Ascending aorta (tissue), 2 donors: ENCODE measurements at regions of chr11 and their contacts with region 1.

Region 1: DNA sequence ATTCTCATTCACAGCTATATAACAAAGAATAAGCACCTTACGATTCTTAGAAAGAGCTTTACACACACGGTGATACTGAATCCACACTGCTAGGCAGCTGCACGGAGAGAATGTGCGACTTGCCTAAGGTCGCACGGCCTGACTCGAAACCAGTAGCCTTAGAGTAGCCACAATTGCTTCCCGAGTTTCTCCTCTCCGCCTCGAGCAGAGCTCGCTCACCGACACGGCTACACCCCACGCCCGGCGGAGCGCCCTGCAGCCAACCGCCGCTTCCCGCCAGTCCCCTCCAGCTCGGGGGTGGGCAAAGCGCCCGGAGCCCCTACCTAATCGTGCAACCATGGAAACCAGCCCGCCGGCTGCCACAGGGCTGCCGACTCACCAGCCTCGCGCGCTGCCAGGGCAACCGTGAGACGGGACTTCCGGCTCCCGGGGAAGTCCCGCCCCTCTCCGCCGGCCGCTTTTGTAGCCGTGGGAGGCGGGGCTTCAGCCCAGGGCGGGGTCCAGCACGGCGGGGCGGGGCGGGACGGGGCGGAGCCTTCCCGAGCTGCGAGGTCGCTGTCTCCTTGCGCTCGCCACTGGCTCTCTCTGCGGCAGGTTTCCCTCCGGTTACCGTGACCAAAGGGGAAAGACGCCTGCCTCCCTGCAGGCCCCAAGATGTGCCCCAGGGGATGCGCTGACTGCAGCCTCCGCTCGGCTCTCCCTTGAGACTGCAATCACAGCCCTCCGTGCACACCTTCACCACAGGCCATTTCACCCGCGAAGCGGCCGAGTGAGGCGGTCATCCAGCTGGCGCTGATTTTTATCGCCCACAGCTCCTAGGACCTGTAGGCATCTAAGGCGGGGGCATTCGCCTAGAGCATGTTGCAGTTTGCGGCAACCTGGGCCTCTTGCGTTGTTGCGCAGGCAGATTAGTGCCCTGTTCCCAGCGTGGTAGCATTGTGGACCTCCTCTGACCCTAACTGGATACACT is 1.1 kb downstream of the BSCL2 start:
- DNase-seq: peak; percentile 85 to 98
- H3K4me3 ChIP-seq: peak overlapping the region; percentile 75 to 76
- H3K27ac ChIP-seq: peak overlapping the region; percentile 61 to 86
- H3K4me1 ChIP-seq: peaks cover 8 to 21% of the 10 kb centered on the region in 2 donors
- H3K27me3 ChIP-seq: no peaks in the 10 kb centered on the region
- CTCF ChIP-seq: no peak

Region 2: DNA sequence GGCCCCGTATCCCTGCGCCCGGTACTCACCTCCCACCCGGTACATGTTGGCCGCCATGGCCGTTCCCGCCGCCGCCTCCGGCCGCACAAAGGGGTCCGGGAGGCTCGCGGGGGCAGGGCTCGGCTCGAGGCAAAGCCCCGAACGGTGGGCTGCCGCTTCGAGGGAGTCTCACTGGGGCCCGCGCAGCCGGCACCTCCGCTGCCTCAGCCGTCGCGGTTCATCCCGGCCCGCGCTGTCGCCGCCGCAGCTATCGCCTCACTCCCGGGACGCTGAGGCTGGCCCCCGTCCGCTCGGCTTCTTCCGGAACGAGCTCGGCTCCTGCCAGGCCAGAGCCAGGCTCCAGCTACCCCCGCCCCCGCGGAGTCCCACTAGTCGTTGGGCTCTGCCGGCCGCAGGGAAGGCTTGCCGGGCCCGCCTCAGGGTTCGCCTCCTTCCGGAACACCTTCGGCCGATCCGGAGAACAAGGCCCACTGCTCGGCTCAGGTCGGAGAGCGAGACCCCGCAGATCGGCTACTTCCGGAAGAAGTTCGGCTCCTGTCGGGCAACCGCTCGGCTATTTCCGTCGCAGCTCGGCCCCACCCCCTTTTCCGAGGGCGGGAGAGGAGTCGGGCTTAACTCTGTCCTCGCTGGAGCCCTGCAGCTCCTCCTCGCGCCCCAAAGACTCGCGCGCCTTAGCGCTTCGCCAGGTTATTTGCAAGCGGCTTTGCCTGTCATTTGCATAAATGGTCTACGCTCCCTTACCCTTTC is 104.6 kb before region 1 on chr11 and contains the start of gene MTA2:
- intact Hi-C with region 1: loop called (anchors 2 kb)
- DNase-seq: peak; percentile 89 to 98
- H3K4me3 ChIP-seq: peak within 1 kb of the TSS; percentile 87 to 98
- H3K27ac ChIP-seq: peak within 1 kb of the TSS; percentile 96 to 97
- H3K4me1 ChIP-seq: peaks cover 8 to 20% of the 10 kb centered on the region in 2 donors
- H3K27me3 ChIP-seq: no peaks in the 10 kb centered on the region
- CTCF ChIP-seq: no peak
- total RNA-seq, gene MTA2: 79.2 TPM

Region 3: DNA sequence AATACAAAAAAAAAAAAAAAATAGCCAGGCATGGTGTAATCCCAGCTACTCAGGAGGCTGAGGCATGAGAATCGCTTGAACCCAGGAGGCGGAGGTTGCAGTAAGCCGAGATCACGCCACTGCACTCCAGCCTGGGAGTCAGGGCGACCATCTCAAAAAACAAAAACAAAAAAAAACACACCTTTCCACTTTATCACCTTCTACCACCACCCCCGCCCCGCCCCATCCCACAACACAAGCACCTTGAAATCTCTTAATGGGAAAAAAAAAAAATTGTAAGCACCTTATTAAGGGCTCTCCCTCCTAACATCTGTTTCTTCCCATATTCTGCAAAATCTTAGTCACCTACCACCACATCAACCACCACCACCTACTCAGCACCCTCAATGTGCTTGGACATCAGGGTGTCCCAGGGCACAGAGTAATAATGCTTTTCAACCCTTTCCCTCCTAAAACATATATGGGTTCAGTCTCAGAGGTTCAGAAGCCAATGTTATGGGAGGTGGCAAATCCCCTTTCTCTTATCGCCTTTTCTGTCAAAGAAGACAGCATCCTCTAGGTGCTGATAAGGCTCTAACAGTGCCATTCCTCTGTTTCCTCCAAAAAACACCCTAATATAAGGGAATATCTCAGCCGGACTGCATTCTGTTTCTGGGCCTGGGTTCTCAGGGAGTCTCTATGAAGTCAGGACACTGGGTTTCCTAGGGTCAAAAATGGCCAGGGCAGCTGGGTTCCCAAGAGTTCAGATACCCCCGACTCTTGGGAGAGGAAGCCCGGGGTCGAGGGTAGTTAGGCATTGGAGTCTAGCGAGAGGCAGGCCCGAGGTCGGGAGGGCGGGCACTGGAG is 53.8 kb before region 1 on chr11:
- intact Hi-C with region 1: loop called (anchors 2 kb)
- DNase-seq: no peak
- H3K4me3 ChIP-seq: peak overlapping the region; percentile 78 to 96
- H3K27ac ChIP-seq: peak overlapping the region; percentile 93 to 94
- H3K4me1 ChIP-seq: peaks cover 0 to 15% of the 10 kb centered on the region in 2 donors
- H3K27me3 ChIP-seq: no peaks in the 10 kb centered on the region
- CTCF ChIP-seq: no peak

Region 4: DNA sequence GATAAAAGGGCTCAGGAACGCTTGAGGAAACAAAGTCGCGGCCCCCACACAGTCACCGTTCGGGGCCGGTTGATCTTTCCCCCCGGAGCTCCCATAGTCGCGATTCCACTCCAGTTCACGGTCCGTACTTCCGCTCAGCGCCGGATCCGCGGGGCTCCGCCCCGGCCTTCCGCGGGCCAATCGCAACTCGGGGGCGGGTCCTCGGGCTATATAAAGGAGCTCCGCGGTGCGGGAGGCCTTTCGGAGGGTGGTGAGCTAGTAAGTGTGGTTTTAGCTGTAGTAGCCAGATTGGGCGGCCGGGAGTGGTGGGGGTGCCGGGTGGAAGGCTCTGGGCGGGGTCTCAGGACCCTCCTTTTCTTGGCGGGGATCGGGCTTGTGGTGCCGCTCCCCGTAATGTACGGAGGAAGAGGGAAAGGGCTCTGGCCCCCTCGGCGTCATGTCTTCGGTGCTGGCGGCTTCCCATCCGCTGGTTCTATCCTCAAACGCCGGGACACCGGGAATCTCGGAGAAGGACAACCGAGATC is 41.0 kb before region 1 on chr11 and contains the starts of genes C11orf98 and CSKMT:
- intact Hi-C with region 1: loop called (anchors 1 kb)
- DNase-seq: peak; percentile 82 to 96
- H3K4me3 ChIP-seq: peak within 1 kb of the TSS; percentile 71 to 93
- H3K27ac ChIP-seq: peak within 1 kb of the TSS; percentile 80 to 89
- H3K4me1 ChIP-seq: peaks cover 10 to 20% of the 10 kb centered on the region in 2 donors
- H3K27me3 ChIP-seq: no peaks in the 10 kb centered on the region
- CTCF ChIP-seq: peak in 1 of 3 experiments; percentile 4
- total RNA-seq, gene C11orf98: 49.8 TPM
- total RNA-seq, gene CSKMT: not detected

Region 5: GRCh38 chr11:62678770-62679696 is 27.1 kb before region 1 on chr11 and contains the start of gene UBXN1:
- intact Hi-C with region 1: loop called (anchors 1 kb)
- DNase-seq: peak; percentile 55 to 95
- H3K4me3 ChIP-seq: peak within 1 kb of the TSS; percentile 78 to 100
- H3K27ac ChIP-seq: peak within 1 kb of the TSS; percentile 96
- H3K4me1 ChIP-seq: peaks cover 7 to 11% of the 10 kb centered on the region in 2 donors
- H3K27me3 ChIP-seq: no peaks in the 10 kb centered on the region
- CTCF ChIP-seq: no peak
- total RNA-seq, gene UBXN1: 60.2 TPM

Region 6: GRCh38 chr11:62831520-62832335 is 125.6 kb after region 1 on chr11 and contains the start of gene STX5:
- intact Hi-C with region 1: loop called (anchors 5 kb)
- DNase-seq: peak; percentile 96 to 100
- H3K4me3 ChIP-seq: peak within 1 kb of the TSS; percentile 74 to 77
- H3K27ac ChIP-seq: peak within 1 kb of the TSS; percentile 90 to 95
- H3K4me1 ChIP-seq: peaks cover 0 to 31% of the 10 kb centered on the region in 2 donors
- H3K27me3 ChIP-seq: no peaks in the 10 kb centered on the region
- CTCF ChIP-seq: no peak
- total RNA-seq, gene STX5: 40.3 TPM